Activated B cell treated with CpG ODN at 0.5 μM for 24 hours (primary cell): ENCODE measurements at regions of chr16 and their contacts with region 1.

Region 1: GRCh38 chr16:4475880-4476788 is at the start of gene HMOX2:
- DNase-seq: peak; percentile 98
- ATAC-seq: peak; percentile 91
- H3K4me3 Mint-ChIP-seq: peak within 1 kb of the TSS; percentile 85
- H3K27ac Mint-ChIP-seq: peak within 1 kb of the TSS; percentile 80
- H3K4me1 Mint-ChIP-seq: peaks cover 37% of the 10 kb centered on the region
- H3K27me3 Mint-ChIP-seq: no peaks in the 10 kb centered on the region
- CTCF ChIP-seq: no peak
- total RNA-seq, gene HMOX2: 30.8 and 32.1 TPM in 2 replicates

Region 2: GRCh38 chr16:4298761-4299522 is 177.2 kb before region 1 on chr16:
- CTCF ChIA-PET with region 1: no interaction called
- POLR2A ChIA-PET with region 1: no interaction called
- intact Hi-C with region 1: no loop called
- DNase-seq: no peak
- ATAC-seq: no peak
- H3K4me3 Mint-ChIP-seq: no peak overlapping the region
- H3K27ac Mint-ChIP-seq: no peak overlapping the region
- H3K4me1 Mint-ChIP-seq: no peaks in the 10 kb centered on the region
- H3K27me3 Mint-ChIP-seq: no peaks in the 10 kb centered on the region
- CTCF ChIP-seq: no peak

Region 3: DNA sequence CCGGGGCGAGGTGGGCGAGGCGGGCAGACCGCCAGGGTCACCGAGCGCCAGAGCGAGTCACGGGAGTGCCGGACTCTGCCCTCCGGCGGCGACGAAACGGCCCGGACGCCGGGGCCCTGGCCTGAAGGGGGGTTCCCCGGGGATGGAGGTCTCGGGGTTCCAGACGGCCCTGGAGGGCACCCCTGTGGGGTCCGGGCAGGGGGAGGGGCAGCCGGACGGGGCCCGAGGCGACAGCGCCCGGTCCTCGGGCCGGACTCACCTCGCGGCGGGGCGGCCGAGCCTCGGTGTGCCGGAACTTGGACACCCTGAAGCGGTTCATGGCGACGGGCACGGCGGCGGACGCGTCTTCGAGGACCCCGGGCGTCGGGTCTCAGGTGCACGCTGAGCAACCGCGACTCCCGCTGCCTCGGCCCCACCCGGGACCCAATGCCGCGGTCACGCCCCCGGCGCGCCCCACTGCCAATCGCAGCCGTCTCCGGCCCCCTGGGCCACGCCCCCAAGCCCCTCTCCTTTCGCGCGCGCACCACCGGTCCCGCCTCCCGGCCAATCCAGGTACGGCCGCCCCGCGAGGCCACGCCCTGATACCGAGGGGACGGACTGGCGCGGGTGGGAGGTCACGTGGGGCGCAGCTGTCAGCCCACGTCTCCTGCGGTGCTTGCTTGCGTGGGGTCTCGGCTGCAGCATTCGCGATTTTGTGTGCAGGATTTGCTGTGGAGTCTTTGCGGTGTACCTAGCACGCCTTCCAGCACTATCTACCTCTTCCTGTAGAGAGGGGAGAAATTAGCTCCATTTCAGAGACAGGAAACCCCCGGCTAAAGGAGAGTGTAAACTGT is 59.7 kb before region 1 on chr16 and contains the start of gene CORO7:
- CTCF ChIA-PET with region 1: interaction called, 3 read pairs
- POLR2A ChIA-PET with region 1: interaction called, 10 read pairs
- intact Hi-C with region 1: loop called (anchors 1 kb)
- DNase-seq: peak; percentile 99
- ATAC-seq: peak; percentile 89
- H3K4me3 Mint-ChIP-seq: peak within 1 kb of the TSS; percentile 91
- H3K27ac Mint-ChIP-seq: peak within 1 kb of the TSS; percentile 95
- H3K4me1 Mint-ChIP-seq: peaks cover 36% of the 10 kb centered on the region
- H3K27me3 Mint-ChIP-seq: no peaks in the 10 kb centered on the region
- CTCF ChIP-seq: no peak
- total RNA-seq, gene CORO7: 74.6 and 86.6 TPM in 2 replicates

Region 4: GRCh38 chr16:4487955-4488498 is 11.9 kb after region 1 on chr16:
- CTCF ChIA-PET with region 1: interaction called, 8 read pairs
- POLR2A ChIA-PET with region 1: interaction called, 12 read pairs
- intact Hi-C with region 1: no loop called
- DNase-seq: no peak
- ATAC-seq: no peak
- H3K4me3 Mint-ChIP-seq: no peak overlapping the region
- H3K27ac Mint-ChIP-seq: no peak overlapping the region
- H3K4me1 Mint-ChIP-seq: peaks cover 8% of the 10 kb centered on the region
- H3K27me3 Mint-ChIP-seq: no peaks in the 10 kb centered on the region
- CTCF ChIP-seq: no peak

Region 5: GRCh38 chr16:4538350-4539235 is 62.5 kb after region 1 on chr16 and contains the start of gene CDIP1:
- CTCF ChIA-PET with region 1: no interaction called
- POLR2A ChIA-PET with region 1: interaction called, 13 read pairs
- intact Hi-C with region 1: loop called (anchors 1 kb)
- DNase-seq: peak; percentile 89
- ATAC-seq: peak; percentile 91
- H3K4me3 Mint-ChIP-seq: peak within 1 kb of the TSS; percentile 76
- H3K27ac Mint-ChIP-seq: peak within 1 kb of the TSS; percentile 73
- H3K4me1 Mint-ChIP-seq: peaks cover 15% of the 10 kb centered on the region
- H3K27me3 Mint-ChIP-seq: peaks cover 1% of the 10 kb centered on the region
- CTCF ChIP-seq: no peak
- total RNA-seq, gene CDIP1: 12.5 and 12.9 TPM in 2 replicates

Region 6: GRCh38 chr16:4624015-4624826 is 148.1 kb after region 1 on chr16 and contains the start of gene MGRN1:
- CTCF ChIA-PET with region 1: no interaction called
- POLR2A ChIA-PET with region 1: no interaction called
- intact Hi-C with region 1: loop called (anchors 2 kb)
- DNase-seq: peak; percentile 86
- ATAC-seq: peak; percentile 90
- H3K4me3 Mint-ChIP-seq: peak within 1 kb of the TSS; percentile 99
- H3K27ac Mint-ChIP-seq: peak within 1 kb of the TSS; percentile 100
- H3K4me1 Mint-ChIP-seq: peaks cover 31% of the 10 kb centered on the region
- H3K27me3 Mint-ChIP-seq: no peaks in the 10 kb centered on the region
- CTCF ChIP-seq: peak; percentile 91
- total RNA-seq, gene MGRN1: 69.6 and 88.6 TPM in 2 replicates